ENCODE measurements at regions of chr12 and their contacts with region 1.

Region 1: DNA sequence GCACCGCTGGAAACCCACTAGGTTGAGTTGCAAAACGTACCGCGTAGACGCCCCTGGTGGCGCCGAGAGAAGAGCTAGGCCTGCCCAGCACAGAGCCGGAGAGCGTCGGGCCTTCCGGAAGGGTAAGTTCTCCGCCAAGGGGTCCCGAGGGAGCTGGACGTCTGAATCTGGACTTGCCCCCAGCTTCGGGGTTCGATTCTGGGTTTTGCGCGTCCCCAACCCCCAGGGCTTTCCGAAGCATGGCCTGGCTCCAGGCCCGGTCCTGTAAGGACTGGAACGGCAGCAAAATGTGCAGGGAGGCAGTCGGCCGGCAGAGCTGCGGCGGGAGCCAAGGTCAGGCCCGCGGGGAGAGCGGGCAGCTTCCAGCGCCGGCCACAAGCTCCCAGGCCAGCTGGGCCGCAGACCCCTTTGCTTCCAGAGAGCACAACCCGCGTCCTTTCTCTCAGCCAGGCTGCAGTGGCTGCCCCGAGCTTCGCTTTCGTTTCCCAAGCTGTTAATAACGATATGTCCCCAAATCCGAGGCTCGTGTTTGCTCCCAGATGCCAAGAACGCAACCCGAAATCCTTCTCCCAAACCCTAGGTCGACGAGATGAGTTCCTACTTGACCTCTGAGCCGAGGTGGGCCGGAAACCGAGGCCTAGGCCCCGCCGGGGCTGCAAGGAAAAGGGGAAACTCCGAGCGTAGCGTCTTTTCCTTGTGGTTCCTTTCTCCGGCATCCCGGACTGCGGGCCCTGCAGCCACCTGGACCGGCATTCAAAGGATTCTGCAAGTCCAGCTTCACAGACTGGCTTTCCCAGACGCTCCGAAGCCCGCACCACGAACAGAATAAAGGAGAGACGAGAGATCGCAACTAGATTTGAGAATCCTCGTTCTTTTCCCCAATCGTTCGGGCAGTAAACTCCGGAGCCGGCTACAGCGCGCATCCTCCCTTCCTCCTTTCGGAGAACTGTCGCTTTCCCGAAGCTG is 3.2 kb upstream of the TBX5 start:
- DNase-seq: peak; percentile 83
- ATAC-seq: peak; percentile 60

Region 2: DNA sequence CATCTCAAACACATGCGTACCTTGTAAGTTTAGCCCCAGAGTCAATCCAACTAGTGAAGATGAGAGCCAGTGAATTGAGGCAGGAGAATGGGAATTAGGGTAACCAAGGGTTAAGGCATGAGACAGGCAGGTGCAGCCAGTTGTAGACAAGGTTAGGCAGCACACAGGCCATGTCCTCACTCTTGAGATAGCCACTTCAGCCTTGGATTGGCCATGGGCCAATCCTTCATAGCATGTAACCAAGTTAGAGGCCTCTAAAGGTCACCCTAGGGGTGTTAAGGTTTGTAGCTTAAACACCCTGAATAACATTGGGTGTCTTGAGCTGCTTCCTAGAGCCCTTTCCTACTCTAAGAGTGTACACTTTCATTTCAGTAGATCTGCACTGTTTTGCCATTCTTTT is 234.8 kb before region 1 on chr12:
- intact Hi-C with region 1: loop called (anchors 5 kb)
- DNase-seq: no peak
- ATAC-seq: peak; percentile 47

Region 3: GRCh38 chr12:114368685-114369452 is 40.3 kb before region 1 on chr12:
- intact Hi-C with region 1: loop called (anchors 5 kb)
- DNase-seq: no peak
- ATAC-seq: peak; percentile 63